Left ventricle myocardium inferior (tissue), 1 donor: ENCODE measurements at regions of chr15 and their contacts with region 1.

Region 1: DNA sequence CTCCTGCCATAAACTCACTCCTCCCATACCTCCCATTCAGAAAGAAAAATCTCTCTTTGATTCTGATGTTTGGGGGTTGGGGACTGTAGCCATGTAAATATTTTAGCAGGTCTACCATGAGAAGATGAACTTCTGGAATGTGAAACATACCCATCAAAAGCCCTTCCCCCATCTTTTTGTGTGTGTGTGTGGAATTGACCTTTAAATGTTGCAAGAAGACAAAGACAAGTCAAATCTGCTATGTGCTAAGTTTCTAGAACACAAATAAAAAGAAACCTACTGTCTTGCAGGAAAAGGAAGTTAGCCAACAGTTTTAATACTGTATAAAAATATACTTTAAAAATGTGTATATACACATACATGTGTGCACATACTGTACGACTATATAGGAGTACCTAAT is 29.7 kb upstream of the USP50 start:
- DNase-seq: no peak
- H3K4me3 ChIP-seq: no peak overlapping the region
- H3K27ac ChIP-seq: no peak overlapping the region
- H3K4me1 ChIP-seq: no peaks in the 10 kb centered on the region
- H3K27me3 ChIP-seq: no peaks in the 10 kb centered on the region
- CTCF ChIP-seq: no peak

Region 2: GRCh38 chr15:50496692-50497091 is 79.5 kb before region 1 on chr15:
- intact Hi-C with region 1: loop called (anchors 10 kb)
- DNase-seq: no peak
- H3K4me3 ChIP-seq: no peak overlapping the region
- H3K27ac ChIP-seq: no peak overlapping the region
- H3K4me1 ChIP-seq: peaks cover 10% of the 10 kb centered on the region
- H3K27me3 ChIP-seq: no peaks in the 10 kb centered on the region
- CTCF ChIP-seq: no peak

Region 3: DNA sequence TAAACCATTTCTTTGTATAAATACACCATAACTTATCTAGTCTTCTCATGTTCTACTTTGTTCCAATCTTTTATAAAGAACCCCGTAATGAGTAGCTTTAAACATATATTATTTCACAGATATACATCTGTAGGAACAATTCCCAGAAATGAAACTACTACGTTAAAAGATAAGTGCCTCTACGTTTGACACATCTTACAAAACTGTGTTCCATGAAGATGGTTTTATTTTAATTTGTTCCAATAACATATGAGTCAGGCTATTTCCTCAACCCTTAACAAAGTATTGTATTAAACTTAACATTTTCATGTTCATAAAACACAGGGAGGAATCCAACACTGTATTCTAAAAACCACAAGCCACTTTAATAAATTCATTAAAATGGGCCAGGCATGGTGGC is 57.5 kb after region 1 on chr15:
- intact Hi-C with region 1: loop called (anchors 10 kb)
- DNase-seq: no peak
- H3K4me3 ChIP-seq: no peak overlapping the region
- H3K27ac ChIP-seq: no peak overlapping the region
- H3K4me1 ChIP-seq: peaks cover 4% of the 10 kb centered on the region
- H3K27me3 ChIP-seq: no peaks in the 10 kb centered on the region
- CTCF ChIP-seq: no peak